Ovary (tissue), 10 donors: ENCODE measurements at regions of chr2 and their contacts with region 1.

Region 1: DNA sequence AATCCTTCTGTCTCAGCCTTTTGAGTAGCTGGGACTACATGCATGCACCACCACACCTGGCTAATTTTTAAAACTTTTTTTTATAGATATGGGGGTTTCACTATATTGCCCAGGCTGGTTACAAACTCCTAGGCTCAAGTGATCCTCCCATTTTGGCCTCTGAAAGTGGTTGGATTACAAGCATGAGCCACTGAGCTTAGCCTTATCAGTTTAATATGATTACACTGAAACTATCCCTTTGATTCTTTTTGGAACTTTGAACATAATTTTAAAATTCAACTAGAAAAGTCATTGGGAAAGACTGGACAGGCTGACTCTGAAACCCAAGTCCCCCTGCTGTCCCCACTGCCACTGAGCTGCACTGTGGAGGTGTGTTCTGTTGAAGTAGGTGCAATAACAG is 114.8 kb downstream of the ARL4C start:
- DNase-seq: no peak
- H3K4me3 ChIP-seq: no peak overlapping the region
- H3K27ac ChIP-seq: no peak overlapping the region
- H3K4me1 ChIP-seq: no peaks in the 10 kb centered on the region
- H3K27me3 ChIP-seq: no peaks in the 10 kb centered on the region
- CTCF ChIP-seq: no peak
- EP300 ChIP-seq: no peak
- POLR2A ChIP-seq: no peak

Region 2: GRCh38 chr2:234929002-234929401 is 546.9 kb after region 1 on chr2:
- intact Hi-C with region 1: loop called in 1 of 4 experiments (anchors 5 kb)
- DNase-seq: no peak
- H3K4me3 ChIP-seq: no peak overlapping the region
- H3K27ac ChIP-seq: no peak overlapping the region
- H3K4me1 ChIP-seq: peaks cover 3% of the 10 kb centered on the region
- H3K27me3 ChIP-seq: no peaks in the 10 kb centered on the region
- CTCF ChIP-seq: no peak
- EP300 ChIP-seq: no peak
- POLR2A ChIP-seq: no peak